ENCODE measurements at regions of chr12 and their contacts with region 1.

Region 1: DNA sequence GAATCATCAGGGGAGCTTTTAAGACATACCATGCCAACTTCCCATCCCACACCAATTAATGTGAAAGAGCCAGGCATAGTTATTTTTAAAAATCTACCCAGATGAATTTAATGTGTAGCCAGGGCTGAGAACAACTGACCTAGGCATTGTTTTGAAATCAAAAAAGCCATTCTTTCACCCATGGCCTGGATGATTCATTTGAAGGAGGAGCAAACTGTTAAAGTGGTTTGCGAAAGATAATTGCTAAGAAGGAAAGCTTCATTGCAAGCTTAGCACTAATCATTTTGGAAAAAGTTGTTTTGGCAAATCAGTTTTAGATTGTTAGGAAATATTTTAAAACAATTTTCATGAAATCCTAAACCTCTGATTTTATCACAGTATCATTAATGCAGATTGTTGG is 2.1 kb upstream of the GTSF1 start:
- DNase-seq: no peak
- ATAC-seq: no peak
- H3K4me3 ChIP-seq: no peak overlapping the region
- H3K4me3 Mint-ChIP-seq: no peak overlapping the region
- H3K27ac ChIP-seq: no peak overlapping the region
- H3K27ac Mint-ChIP-seq: no peak overlapping the region
- H3K4me1 ChIP-seq: no peaks in the 10 kb centered on the region
- H3K4me1 Mint-ChIP-seq: peaks cover 0 to 6% (median 6%) of the 10 kb centered on the region in 3 donors
- H3K27me3 ChIP-seq: peaks cover 0 to 7% of the 10 kb centered on the region in 2 experiments
- H3K27me3 Mint-ChIP-seq: peaks cover 3 to 7% of the 10 kb centered on the region in 2 donors

Region 2: DNA sequence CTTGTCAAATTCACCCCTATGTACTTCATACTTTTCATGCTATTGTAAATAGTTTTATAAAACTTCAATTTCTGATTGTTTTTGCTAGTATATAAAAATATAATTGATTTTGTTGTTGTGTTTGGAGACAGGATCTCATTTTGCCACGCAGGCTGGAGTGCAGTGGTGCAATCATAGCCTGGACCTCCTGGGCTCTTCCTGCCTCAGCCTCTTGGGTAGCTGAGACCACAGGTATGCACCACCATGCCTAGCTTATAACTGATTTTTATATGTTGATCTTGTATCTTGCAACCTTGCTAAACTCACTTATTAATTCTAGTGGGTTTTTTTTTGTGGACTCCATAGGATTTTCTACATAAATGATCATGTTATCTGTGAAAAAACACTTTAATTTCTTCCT is 823.2 kb before region 1 on chr12:
- CTCF ChIA-PET with region 1: no interaction called
- POLR2A ChIA-PET with region 1: interaction called in 1 of 2 experiments, 12 read pairs
- DNase-seq: no peak
- ATAC-seq: no peak
- H3K4me3 ChIP-seq: no peak overlapping the region
- H3K4me3 Mint-ChIP-seq: no peak overlapping the region
- H3K27ac ChIP-seq: no peak overlapping the region
- H3K27ac Mint-ChIP-seq: no peak overlapping the region
- H3K4me1 ChIP-seq: no peaks in the 10 kb centered on the region
- H3K4me1 Mint-ChIP-seq: no peaks in the 10 kb centered on the region
- H3K27me3 ChIP-seq: no peaks in the 10 kb centered on the region
- H3K27me3 Mint-ChIP-seq: no peaks in the 10 kb centered on the region